Natural killer cell (primary cell): ENCODE measurements at regions of chr15 and their contacts with region 1.

Region 1: GRCh38 chr15:66212563-66212921 is 41.0 kb downstream of the MEGF11 start:
- DNase-seq: no peak
- ATAC-seq: peak in 1 of 3 donors; percentile 11
- H3K4me3 ChIP-seq: no peak overlapping the region
- H3K4me3 Mint-ChIP-seq: no peak overlapping the region
- H3K27ac ChIP-seq: no peak overlapping the region
- H3K27ac Mint-ChIP-seq: no peak overlapping the region
- H3K4me1 ChIP-seq: no peaks in the 10 kb centered on the region
- H3K4me1 Mint-ChIP-seq: no peaks in the 10 kb centered on the region
- H3K27me3 ChIP-seq: no peaks in the 10 kb centered on the region
- H3K27me3 Mint-ChIP-seq: peaks cover 6 to 7% of the 10 kb centered on the region in 2 donors
- CTCF ChIP-seq: no peak

Region 2: DNA sequence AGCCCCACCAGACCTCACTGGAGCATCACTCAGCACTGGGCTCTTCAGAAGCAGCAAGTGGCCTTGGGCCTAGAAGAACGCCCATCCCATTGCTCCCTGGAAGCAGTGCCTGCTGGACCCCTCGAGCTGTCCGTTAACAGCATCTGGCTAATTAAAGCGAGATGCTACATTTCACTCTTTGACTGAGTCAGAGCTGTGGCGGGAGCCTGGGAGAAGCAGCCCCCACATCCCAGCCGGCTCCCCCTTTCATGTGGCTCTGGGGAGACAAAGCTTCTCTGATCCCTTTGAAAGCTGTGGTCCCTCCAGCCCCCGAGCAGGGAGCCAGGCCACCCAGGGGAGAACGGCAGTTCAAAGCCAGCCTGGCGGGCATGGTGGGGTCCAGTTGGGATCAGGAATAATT is 62.7 kb before region 1 on chr15:
- intact Hi-C with region 1: loop called (anchors 2 kb)
- DNase-seq: no peak
- ATAC-seq: no peak
- H3K4me3 ChIP-seq: no peak overlapping the region
- H3K4me3 Mint-ChIP-seq: no peak overlapping the region
- H3K27ac ChIP-seq: no peak overlapping the region
- H3K27ac Mint-ChIP-seq: no peak overlapping the region
- H3K4me1 ChIP-seq: no peaks in the 10 kb centered on the region
- H3K4me1 Mint-ChIP-seq: no peaks in the 10 kb centered on the region
- H3K27me3 ChIP-seq: no peaks in the 10 kb centered on the region
- H3K27me3 Mint-ChIP-seq: peaks cover 10 to 23% of the 10 kb centered on the region in 2 donors
- CTCF ChIP-seq: no peak

Region 3: GRCh38 chr15:66169023-66169422 is 43.5 kb before region 1 on chr15:
- intact Hi-C with region 1: no loop called
- DNase-seq: no peak
- ATAC-seq: no peak
- H3K4me3 ChIP-seq: no peak overlapping the region
- H3K4me3 Mint-ChIP-seq: no peak overlapping the region
- H3K27ac ChIP-seq: no peak overlapping the region
- H3K27ac Mint-ChIP-seq: no peak overlapping the region
- H3K4me1 ChIP-seq: no peaks in the 10 kb centered on the region
- H3K4me1 Mint-ChIP-seq: no peaks in the 10 kb centered on the region
- H3K27me3 ChIP-seq: no peaks in the 10 kb centered on the region
- H3K27me3 Mint-ChIP-seq: peaks cover 12 to 18% of the 10 kb centered on the region in 2 donors
- CTCF ChIP-seq: no peak

Region 4: DNA sequence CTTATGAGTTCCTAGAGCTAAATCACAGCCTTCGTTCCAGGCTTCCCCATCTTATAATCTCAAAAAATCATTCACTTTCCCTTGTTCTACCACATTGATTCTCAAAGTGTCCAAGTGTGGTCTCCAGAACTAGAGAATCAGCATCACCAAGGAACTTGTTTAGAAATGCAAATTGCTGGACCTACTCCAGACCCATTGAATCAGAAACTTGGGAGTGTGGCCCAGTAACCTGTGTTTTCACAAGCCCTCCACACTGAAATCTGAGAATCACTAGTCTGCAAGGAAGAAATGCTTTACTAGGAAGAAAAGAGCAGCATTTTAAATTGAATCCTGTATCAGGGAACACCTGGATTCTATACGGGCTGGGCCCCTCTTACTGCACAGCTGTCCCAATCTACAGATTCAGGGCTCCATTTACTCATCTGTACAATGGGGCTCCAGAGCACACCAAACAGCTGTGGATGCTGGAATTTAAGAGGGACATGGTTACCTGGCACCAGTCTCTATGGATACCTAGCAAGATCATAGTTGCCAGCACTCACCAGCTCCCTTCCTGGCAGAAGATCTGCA is 37.1 kb after region 1 on chr15:
- intact Hi-C with region 1: no loop called
- DNase-seq: no peak
- ATAC-seq: no peak
- H3K4me3 ChIP-seq: no peak overlapping the region
- H3K4me3 Mint-ChIP-seq: peak overlapping the region; percentile 17
- H3K27ac ChIP-seq: no peak overlapping the region
- H3K27ac Mint-ChIP-seq: no peak overlapping the region
- H3K4me1 ChIP-seq: peaks cover 26% of the 10 kb centered on the region
- H3K4me1 Mint-ChIP-seq: peaks cover 15 to 19% of the 10 kb centered on the region in 2 donors
- H3K27me3 ChIP-seq: peaks cover 31% of the 10 kb centered on the region
- H3K27me3 Mint-ChIP-seq: peaks cover 45 to 53% of the 10 kb centered on the region in 2 donors
- CTCF ChIP-seq: no peak

Region 5: GRCh38 chr15:66287461-66288057 is 75.0 kb after region 1 on chr15:
- intact Hi-C with region 1: no loop called
- DNase-seq: peak in 1 of 2 donors; percentile 67
- ATAC-seq: peak in 1 of 3 donors; percentile 40
- H3K4me3 ChIP-seq: no peak overlapping the region
- H3K4me3 Mint-ChIP-seq: no peak overlapping the region
- H3K27ac ChIP-seq: no peak overlapping the region
- H3K27ac Mint-ChIP-seq: no peak overlapping the region
- H3K4me1 ChIP-seq: peaks cover 11% of the 10 kb centered on the region
- H3K4me1 Mint-ChIP-seq: peaks cover 14 to 16% of the 10 kb centered on the region in 2 donors
- H3K27me3 ChIP-seq: no peaks in the 10 kb centered on the region
- H3K27me3 Mint-ChIP-seq: no peaks in the 10 kb centered on the region
- CTCF ChIP-seq: peak; percentile 83

Region 6: DNA sequence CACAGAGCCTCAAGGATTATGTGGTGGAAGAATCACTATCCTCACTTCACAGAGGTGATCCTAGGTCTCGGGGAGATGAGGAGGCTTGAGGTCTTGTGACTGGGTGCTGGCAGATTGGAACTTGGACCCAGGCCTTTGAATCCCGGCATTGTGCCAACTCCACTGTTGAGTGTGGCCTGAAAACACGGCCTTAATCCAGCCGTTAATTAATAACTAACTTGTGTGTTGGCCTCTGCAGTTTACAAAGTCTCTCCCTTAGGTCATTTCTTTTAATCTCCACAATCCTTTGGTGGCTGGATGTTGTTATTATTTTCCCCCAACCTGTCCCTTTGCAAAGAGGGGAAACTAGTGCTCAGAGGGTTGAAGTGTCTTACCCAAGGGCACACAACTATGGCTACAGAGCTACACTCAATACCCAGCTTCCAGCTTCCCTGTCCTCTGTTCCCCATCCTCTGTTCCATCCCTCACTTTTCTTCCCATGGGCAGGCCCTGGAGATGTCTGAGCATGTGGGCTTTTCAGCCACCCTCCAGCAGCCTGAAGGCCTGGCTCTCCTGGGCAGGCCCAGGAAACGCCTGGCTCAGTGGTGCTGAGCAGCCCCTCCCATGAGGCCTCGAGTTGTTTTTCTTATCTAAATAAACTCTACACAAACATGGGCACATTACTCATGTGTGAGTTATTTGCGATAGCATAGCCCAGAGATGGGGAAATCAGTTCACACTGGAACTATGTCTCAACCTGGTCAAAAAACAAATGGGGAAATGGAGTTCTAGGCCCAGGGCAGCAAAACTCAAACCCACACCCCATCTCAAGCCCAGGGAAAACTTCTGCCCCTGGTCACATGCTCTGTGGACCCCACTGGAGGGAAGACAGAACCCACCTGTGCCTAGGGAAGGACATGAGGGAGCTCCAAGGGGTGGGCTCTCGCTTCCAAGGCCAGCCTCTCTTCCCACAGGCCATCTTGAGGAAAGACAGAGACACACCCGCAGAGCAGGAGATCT is 836.0 kb after region 1 on chr15:
- intact Hi-C with region 1: no loop called
- DNase-seq: no peak
- ATAC-seq: no peak
- H3K4me3 ChIP-seq: no peak overlapping the region
- H3K4me3 Mint-ChIP-seq: no peak overlapping the region
- H3K27ac ChIP-seq: no peak overlapping the region
- H3K27ac Mint-ChIP-seq: no peak overlapping the region
- H3K4me1 ChIP-seq: peaks cover 11% of the 10 kb centered on the region
- H3K4me1 Mint-ChIP-seq: peaks cover 6 to 11% of the 10 kb centered on the region in 2 donors
- H3K27me3 ChIP-seq: no peaks in the 10 kb centered on the region
- H3K27me3 Mint-ChIP-seq: peaks cover 0 to 3% of the 10 kb centered on the region in 2 donors
- CTCF ChIP-seq: no peak